ENCODE measurements at regions of chr7 and their contacts with region 1.

Region 1: GRCh38 chr7:126163647-126164046 is 1089.1 kb downstream of the GRM8 start:
- DNase-seq: no peak
- H3K4me3 ChIP-seq: no peak overlapping the region
- H3K27ac ChIP-seq: no peak overlapping the region
- H3K4me1 ChIP-seq: no peaks in the 10 kb centered on the region
- H3K27me3 ChIP-seq: no peaks in the 10 kb centered on the region
- CTCF ChIP-seq: no peak
- POLR2A ChIP-seq: no peak

Region 2: DNA sequence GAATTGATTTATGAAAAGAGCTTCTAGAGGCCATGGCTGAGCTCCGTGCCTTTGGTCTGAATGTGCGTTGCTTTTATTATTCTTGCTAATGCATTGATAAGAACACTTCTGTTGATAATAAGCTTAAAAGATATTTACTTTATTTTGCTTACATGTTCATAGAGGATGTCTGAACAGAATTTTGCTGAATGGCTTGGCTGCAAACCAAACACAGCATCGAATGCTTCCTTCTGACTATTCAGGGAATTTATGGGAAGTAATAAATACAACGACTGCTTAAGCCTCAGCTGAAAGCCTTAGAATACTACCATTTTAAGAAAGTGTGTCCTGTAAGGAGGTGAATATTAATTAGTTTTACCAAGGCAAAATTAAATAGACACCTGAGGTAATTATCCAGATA is 590.5 kb before region 1 on chr7:
- intact Hi-C with region 1: loop called (anchors 10 kb)
- DNase-seq: no peak
- H3K4me3 ChIP-seq: no peak overlapping the region
- H3K27ac ChIP-seq: no peak overlapping the region
- H3K4me1 ChIP-seq: no peaks in the 10 kb centered on the region
- H3K27me3 ChIP-seq: no peaks in the 10 kb centered on the region
- CTCF ChIP-seq: no peak
- POLR2A ChIP-seq: no peak

Region 3: DNA sequence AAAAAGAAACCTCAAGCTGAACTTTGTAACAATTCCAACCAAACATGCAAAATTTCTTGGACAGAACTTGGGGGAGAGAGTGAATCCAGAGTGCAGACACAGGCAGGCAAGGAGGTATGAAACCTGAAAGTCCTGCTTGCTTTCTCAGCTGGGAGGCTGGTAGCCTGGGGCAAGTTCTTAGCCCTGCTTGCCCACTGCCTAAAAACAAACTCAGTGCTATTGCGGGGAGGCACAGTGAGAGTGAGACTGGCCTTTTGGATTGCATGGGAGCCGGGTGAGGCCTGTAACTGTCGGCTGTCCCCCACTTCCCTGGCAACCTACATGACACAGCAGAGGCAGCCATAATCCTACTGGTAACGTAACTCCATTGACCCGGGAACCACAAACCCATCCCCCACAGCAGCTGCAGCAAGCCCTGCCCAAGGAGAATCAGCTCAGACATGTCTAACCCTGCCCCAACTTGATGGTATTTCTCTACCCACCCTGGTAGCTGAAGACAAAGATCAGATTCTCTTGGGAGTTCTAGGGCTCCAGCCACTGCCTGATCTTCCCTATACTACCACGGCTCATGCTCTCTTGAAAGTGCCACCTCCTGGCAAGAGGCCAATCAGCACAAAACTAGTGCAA is 425.5 kb after region 1 on chr7:
- intact Hi-C with region 1: no loop called
- DNase-seq: no peak
- H3K4me3 ChIP-seq: no peak overlapping the region
- H3K27ac ChIP-seq: no peak overlapping the region
- H3K4me1 ChIP-seq: no peaks in the 10 kb centered on the region
- H3K27me3 ChIP-seq: no peaks in the 10 kb centered on the region
- CTCF ChIP-seq: no peak
- POLR2A ChIP-seq: no peak

Measured in breast epithelium (tissue), 4 donors.